ENCODE measurements at regions of chrX and their contacts with region 1.

Region 1: GRCh38 chrX:46758906-46759644 is at the start of gene SLC9A7:
- DNase-seq: peak; percentile 88
- ATAC-seq: peak; percentile 85
- total RNA-seq, gene SLC9A7: 2.5 TPM

Region 2: DNA sequence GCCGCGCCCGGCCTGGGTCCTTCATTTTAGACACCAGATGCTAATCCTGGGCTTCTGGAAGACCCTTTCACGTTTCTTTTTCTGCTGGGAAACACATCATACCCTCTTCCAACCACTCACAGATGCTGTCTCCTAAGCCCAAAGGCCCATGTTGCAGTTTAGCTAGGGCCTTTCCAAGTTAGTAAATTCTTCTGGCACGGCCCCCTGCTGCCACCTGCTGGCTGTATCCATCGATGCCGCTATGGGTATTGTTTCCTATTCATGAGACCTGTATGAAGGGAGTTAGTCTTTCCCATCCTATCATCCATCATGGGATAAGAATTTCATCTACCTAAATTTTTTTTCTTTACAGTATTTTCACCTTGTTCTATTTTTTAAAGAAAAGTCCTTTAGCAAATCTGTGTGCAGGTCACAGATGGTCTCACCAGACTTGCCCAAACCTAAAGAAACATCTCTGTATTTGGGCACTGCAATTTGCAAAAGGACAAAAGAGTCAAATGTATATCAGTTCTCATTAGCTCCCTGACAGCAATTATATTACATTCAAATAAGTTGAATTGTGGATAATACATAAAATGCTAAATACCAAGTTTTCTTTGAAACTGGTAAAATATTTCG is 37.6 kb after region 1 on chrX:
- intact Hi-C with region 1: loop called (anchors 1 kb)
- DNase-seq: peak; percentile 82
- ATAC-seq: peak; percentile 68

Region 3: GRCh38 chrX:47030339-47030738 is 271.3 kb after region 1 on chrX:
- intact Hi-C with region 1: loop called (anchors 5 kb)
- DNase-seq: no peak
- ATAC-seq: no peak

Region 4: GRCh38 chrX:47093248-47093647 is 334.2 kb after region 1 on chrX:
- intact Hi-C with region 1: loop called (anchors 10 kb)
- DNase-seq: no peak
- ATAC-seq: no peak

Measured in Right ventricle myocardium inferior (tissue), 1 donor.